Naive thymus-derived CD4-positive, alpha-beta T cell (primary cell): ENCODE measurements at regions of chr6 and their contacts with region 1.

Region 1: DNA sequence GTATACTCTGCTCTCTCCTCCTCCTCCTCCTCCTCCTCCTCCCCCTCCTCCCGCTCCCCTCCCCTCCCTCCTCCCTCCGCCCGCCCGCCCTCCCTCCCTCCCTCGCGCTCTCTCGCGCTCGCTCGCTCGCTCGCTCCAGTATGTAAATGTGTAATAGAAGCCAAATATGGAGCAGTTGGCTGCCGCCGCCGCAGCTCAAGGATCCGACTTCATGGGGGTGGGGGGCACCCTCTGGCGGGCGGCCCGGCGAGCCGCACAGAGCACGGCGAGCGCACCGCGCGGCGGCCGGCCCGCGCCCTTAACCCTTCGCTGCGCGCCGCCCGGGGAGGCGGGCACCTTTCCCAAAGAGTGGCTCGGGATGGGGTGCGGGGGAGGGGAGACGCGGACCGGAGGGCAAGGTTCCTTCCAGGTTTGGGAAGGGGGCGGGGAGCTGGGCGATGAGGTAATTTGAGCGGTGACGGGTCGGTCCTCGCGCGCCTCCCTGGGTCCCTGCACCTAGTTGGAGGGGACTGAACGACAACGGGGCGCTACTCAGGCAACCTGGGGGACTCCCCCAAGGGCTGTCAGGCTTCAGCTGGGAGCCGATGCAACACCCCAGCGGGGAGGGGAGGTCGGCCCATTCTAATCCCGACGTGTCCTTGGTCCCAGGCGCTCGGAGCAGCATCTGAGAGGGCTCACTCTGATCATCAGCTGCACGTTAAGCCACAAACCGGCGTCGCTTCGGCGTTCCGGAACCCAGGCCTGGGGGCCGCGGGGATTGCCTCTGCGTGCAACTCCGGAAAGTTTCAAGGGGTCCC is 409 bp upstream of the ATXN1 start:
- DNase-seq: peak; percentile 68 to 92 (median 81)
- ATAC-seq: peak; percentile 72
- H3K4me3 ChIP-seq: peak overlapping the region; percentile 91
- H3K4me3 Mint-ChIP-seq: peak overlapping the region; percentile 87 to 100 (median 98)
- H3K27ac ChIP-seq: peak overlapping the region; percentile 95
- H3K27ac Mint-ChIP-seq: peak overlapping the region; percentile 95 to 100 (median 97)
- H3K4me1 ChIP-seq: peaks cover 7 to 34% of the 10 kb centered on the region in 2 donors
- H3K4me1 Mint-ChIP-seq: peaks cover 18 to 61% (median 42%) of the 10 kb centered on the region in 7 donors
- H3K27me3 ChIP-seq: no peaks in the 10 kb centered on the region
- H3K27me3 Mint-ChIP-seq: peaks cover 0 to 4% (median 0%) of the 10 kb centered on the region in 5 donors

Region 2: DNA sequence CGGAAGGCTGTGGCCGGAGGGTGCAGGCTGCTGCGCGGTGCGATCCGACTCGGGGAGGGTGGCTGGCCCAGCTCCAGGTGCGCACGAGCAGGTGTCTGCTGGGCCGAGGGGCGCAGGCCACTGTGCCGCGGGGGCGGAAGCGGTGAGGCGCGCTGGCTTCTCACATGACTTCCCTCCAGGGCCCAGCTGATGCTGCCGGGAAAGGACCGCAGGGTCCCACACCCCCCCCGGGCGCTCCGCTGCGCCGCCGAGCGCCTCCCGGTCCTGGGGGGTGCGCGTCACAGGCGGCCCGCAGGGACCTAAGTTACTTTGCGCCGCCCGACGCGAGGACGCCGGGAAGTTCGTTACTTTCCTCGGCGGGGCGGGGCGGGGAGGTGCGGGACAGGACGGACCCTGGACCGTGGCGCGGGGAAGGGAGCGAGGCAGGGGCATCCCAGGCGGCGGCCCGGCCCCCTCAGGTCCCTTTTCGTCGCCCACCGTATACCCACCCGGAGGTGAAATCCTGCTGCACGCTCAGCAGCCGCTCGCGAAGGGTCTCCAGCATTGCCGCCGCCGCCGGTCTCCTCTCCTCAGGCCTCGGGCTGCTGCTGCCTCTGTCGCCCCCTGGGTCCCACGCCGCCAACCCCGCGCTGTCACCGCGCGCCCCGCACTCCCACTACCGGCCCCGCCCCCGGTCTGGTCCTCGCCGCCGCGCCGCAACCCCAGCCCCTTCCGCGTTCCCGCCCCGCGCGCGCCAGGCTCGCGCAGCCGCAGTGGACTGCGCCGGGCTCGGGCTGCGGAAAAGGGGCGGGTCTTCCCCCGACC is 1099.1 kb before region 1 on chr6 and contains the start of gene DTNBP1:
- CTCF ChIA-PET with region 1: no interaction called
- POLR2A ChIA-PET with region 1: no interaction called
- intact Hi-C with region 1: loop called (anchors 2 to 10 kb)
- DNase-seq: peak; percentile 74 to 93 (median 84)
- ATAC-seq: peak; percentile 90
- H3K4me3 ChIP-seq: peak within 1 kb of the TSS; percentile 82
- H3K4me3 Mint-ChIP-seq: peak within 1 kb of the TSS; percentile 75 to 93 (median 88)
- H3K27ac ChIP-seq: peak within 1 kb of the TSS; percentile 71
- H3K27ac Mint-ChIP-seq: peak within 1 kb of the TSS; percentile 71 to 90 (median 82)
- H3K4me1 ChIP-seq: peaks cover 11 to 20% of the 10 kb centered on the region in 2 donors
- H3K4me1 Mint-ChIP-seq: peaks cover 20 to 47% (median 39%) of the 10 kb centered on the region in 7 donors
- H3K27me3 ChIP-seq: no peaks in the 10 kb centered on the region
- H3K27me3 Mint-ChIP-seq: peaks cover 0 to 20% (median 4%) of the 10 kb centered on the region in 5 donors
- total RNA-seq, gene DTNBP1: 19.8 to 30.8 (median 25.3) TPM

Region 3: GRCh38 chr6:16409531-16410441 is 351.9 kb before region 1 on chr6:
- CTCF ChIA-PET with region 1: no interaction called
- POLR2A ChIA-PET with region 1: no interaction called
- intact Hi-C with region 1: loop called in 1 of 2 experiments (anchors 5 kb)
- DNase-seq: peak; percentile 3 to 45 (median 29)
- ATAC-seq: peak; percentile 78
- H3K4me3 ChIP-seq: no peak overlapping the region
- H3K4me3 Mint-ChIP-seq: peak overlapping the region in 6 of 10 donors; percentile 11 to 46 (median 29)
- H3K27ac ChIP-seq: no peak overlapping the region
- H3K27ac Mint-ChIP-seq: peak overlapping the region in 2 of 9 donors; percentile 34 to 45
- H3K4me1 ChIP-seq: peaks cover 0 to 8% of the 10 kb centered on the region in 2 donors
- H3K4me1 Mint-ChIP-seq: peaks cover 7 to 61% (median 20%) of the 10 kb centered on the region in 7 donors
- H3K27me3 ChIP-seq: no peaks in the 10 kb centered on the region
- H3K27me3 Mint-ChIP-seq: no peaks in the 10 kb centered on the region

Region 4: DNA sequence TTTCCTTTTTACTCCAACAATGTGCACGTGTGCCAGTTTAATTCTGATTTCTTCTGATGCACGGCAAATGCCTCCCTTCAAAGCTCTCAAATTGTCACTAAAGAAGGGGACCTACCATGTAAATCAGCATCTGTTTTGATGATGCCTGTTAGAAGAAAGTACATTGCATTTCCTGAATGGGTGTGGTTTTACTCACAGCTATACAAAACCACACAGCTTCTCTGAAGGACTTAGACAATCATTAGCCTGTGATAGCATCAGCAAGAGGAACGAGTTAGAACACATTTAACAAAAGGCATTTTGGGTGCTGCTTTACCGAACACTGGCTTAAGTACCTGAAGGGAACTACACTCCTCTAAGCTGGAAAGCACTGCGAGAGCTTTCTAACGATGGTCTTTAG is 109.8 kb before region 1 on chr6:
- CTCF ChIA-PET with region 1: no interaction called
- POLR2A ChIA-PET with region 1: no interaction called
- intact Hi-C with region 1: loop called (anchors 2 to 5 kb)
- DNase-seq: peak in 7 of 9 donors; percentile 4 to 55 (median 27)
- ATAC-seq: peak; percentile 88
- H3K4me3 ChIP-seq: no peak overlapping the region
- H3K4me3 Mint-ChIP-seq: peak overlapping the region in 3 of 10 donors; percentile 33 to 68 (median 41)
- H3K27ac ChIP-seq: no peak overlapping the region
- H3K27ac Mint-ChIP-seq: peak overlapping the region in 5 of 9 donors; percentile 0 to 86 (median 12)
- H3K4me1 ChIP-seq: peaks cover 11 to 48% of the 10 kb centered on the region in 2 donors
- H3K4me1 Mint-ChIP-seq: peaks cover 20 to 63% (median 24%) of the 10 kb centered on the region in 7 donors
- H3K27me3 ChIP-seq: no peaks in the 10 kb centered on the region
- H3K27me3 Mint-ChIP-seq: no peaks in the 10 kb centered on the region

Region 5: GRCh38 chr6:16712931-16713484 is 48.7 kb before region 1 on chr6:
- CTCF ChIA-PET with region 1: interaction called, 6 read pairs
- POLR2A ChIA-PET with region 1: interaction called, 3 read pairs
- intact Hi-C with region 1: loop called in 1 of 2 experiments (anchors 10 kb)
- DNase-seq: no peak
- ATAC-seq: peak; percentile 70
- H3K4me3 ChIP-seq: peak overlapping the region; percentile 3
- H3K4me3 Mint-ChIP-seq: peak overlapping the region in 7 of 10 donors; percentile 12 to 79 (median 56)
- H3K27ac ChIP-seq: no peak overlapping the region
- H3K27ac Mint-ChIP-seq: peak overlapping the region in 5 of 9 donors; percentile 52 to 85 (median 67)
- H3K4me1 ChIP-seq: peaks cover 0 to 18% of the 10 kb centered on the region in 2 donors
- H3K4me1 Mint-ChIP-seq: peaks cover 11 to 54% (median 22%) of the 10 kb centered on the region in 7 donors
- H3K27me3 ChIP-seq: no peaks in the 10 kb centered on the region
- H3K27me3 Mint-ChIP-seq: no peaks in the 10 kb centered on the region

Region 6: GRCh38 chr6:17015144-17015543 is 253.5 kb after region 1 on chr6:
- CTCF ChIA-PET with region 1: no interaction called
- POLR2A ChIA-PET with region 1: no interaction called
- intact Hi-C with region 1: loop called in 1 of 2 experiments (anchors 5 kb)
- DNase-seq: peak in 3 of 9 donors; percentile 2 to 19 (median 11)
- ATAC-seq: peak; percentile 76
- H3K4me3 ChIP-seq: no peak overlapping the region
- H3K4me3 Mint-ChIP-seq: peak overlapping the region in 9 of 10 donors; percentile 61 to 85 (median 77)
- H3K27ac ChIP-seq: no peak overlapping the region
- H3K27ac Mint-ChIP-seq: peak overlapping the region in 5 of 9 donors; percentile 8 to 76 (median 53)
- H3K4me1 ChIP-seq: peaks cover 0 to 4% of the 10 kb centered on the region in 2 donors
- H3K4me1 Mint-ChIP-seq: peaks cover 6 to 17% (median 10%) of the 10 kb centered on the region in 7 donors
- H3K27me3 ChIP-seq: no peaks in the 10 kb centered on the region
- H3K27me3 Mint-ChIP-seq: peaks cover 0 to 48% (median 13%) of the 10 kb centered on the region in 5 donors

Region 7: GRCh38 chr6:17417817-17418216 is 656.1 kb after region 1 on chr6:
- CTCF ChIA-PET with region 1: no interaction called
- POLR2A ChIA-PET with region 1: no interaction called
- intact Hi-C with region 1: no loop called
- DNase-seq: no peak
- ATAC-seq: no peak
- H3K4me3 ChIP-seq: no peak overlapping the region
- H3K4me3 Mint-ChIP-seq: no peak overlapping the region
- H3K27ac ChIP-seq: no peak overlapping the region
- H3K27ac Mint-ChIP-seq: no peak overlapping the region
- H3K4me1 ChIP-seq: no peaks in the 10 kb centered on the region
- H3K4me1 Mint-ChIP-seq: no peaks in the 10 kb centered on the region
- H3K27me3 ChIP-seq: no peaks in the 10 kb centered on the region
- H3K27me3 Mint-ChIP-seq: peaks cover 2 to 30% (median 22%) of the 10 kb centered on the region in 5 donors

Region 8: DNA sequence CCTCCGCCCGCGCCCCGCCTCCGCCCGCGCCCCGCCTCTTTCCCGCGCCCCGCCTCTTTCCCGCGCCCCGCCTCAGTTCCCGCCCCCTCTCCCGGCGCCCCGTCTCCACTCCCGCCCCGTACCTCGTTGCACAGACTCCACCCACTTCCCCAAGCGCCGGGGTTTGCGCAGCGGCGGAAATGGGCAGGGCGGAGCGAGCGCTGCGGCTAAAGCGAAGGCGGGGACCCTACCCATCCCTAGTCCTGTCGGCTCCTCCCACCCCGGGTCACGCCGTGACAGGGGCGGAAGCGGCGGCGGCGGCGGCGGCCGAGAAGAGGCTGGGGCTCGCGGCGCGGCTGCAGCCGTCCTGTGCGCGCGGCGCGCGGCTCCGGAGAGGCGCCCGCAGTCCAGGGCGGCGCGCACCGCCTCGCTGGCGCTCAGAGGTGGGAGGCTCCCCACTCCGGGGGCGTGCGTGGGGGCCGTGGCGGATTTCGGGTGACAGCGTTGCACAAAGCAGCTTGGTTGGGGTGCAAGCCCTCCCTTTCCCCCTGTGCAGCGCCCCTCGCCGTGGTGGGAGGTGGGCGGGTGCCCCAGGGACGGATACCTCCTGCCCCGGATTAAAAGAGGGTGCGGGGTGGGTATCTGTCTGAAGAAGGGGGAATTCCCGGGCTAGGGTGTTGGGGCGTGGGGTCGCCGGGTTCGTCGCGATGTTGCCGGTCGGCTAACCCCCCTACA is 1393.6 kb after region 1 on chr6 and contains the start of gene KDM1B:
- CTCF ChIA-PET with region 1: no interaction called
- POLR2A ChIA-PET with region 1: no interaction called
- intact Hi-C with region 1: loop called (anchors 1 to 5 kb)
- DNase-seq: peak; percentile 95 to 100 (median 99)
- ATAC-seq: peak; percentile 95
- H3K4me3 ChIP-seq: peak within 1 kb of the TSS; percentile 95
- H3K4me3 Mint-ChIP-seq: peak within 1 kb of the TSS; percentile 91 to 99 (median 99)
- H3K27ac ChIP-seq: peak within 1 kb of the TSS; percentile 93
- H3K27ac Mint-ChIP-seq: peak within 1 kb of the TSS; percentile 91 to 99 (median 97)
- H3K4me1 ChIP-seq: peaks cover 8 to 17% of the 10 kb centered on the region in 2 donors
- H3K4me1 Mint-ChIP-seq: peaks cover 24 to 36% (median 28%) of the 10 kb centered on the region in 7 donors
- H3K27me3 ChIP-seq: no peaks in the 10 kb centered on the region
- H3K27me3 Mint-ChIP-seq: peaks cover 0 to 7% (median 0%) of the 10 kb centered on the region in 5 donors
- total RNA-seq, gene KDM1B: 7.3 to 25.4 (median 12.5) TPM